ENCODE measurements at regions of chr1 and their contacts with region 1.

Region 1: DNA sequence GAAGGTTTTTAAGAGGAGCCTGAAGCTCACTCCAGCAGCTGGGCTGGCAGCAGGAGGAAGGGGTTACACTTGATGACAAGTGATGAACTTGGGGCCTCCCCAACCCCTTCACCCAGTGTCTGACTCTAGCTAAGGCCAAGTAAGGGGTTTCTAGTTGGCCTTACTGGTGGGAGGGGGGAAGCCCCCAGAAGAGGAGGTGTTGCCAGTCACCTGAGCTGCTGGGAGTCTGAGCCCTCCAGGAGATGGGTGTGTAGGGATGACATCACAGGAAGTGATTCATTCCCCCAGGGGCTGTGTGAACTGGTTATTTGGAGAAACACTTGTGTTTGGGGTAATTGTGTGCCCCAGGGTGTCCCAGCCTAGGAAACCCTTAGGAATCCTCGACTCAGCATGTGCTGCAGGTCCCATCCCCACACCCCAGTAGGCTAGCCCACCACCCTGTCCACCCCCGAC is 3.1 kb downstream of the PADI1 start:
- DNase-seq: peak; percentile 72
- ATAC-seq: peak; percentile 87
- H3K4me3 ChIP-seq: no peak overlapping the region
- H3K27ac ChIP-seq: no peak overlapping the region
- H3K4me1 ChIP-seq: peaks cover 14% of the 10 kb centered on the region
- H3K27me3 ChIP-seq: peaks cover 0 to 2% of the 10 kb centered on the region in 2 experiments; a peak in 2 of 4 replicates
- CTCF ChIP-seq: no peak
- EP300 ChIP-seq: peak in 1 of 2 experiments; percentile 61; a peak in 1 of 4 replicates
- POLR2A ChIP-seq: no peak
- RAD21 ChIP-seq: no peak

Region 2: GRCh38 chr1:17141441-17142197 is 66.4 kb before region 1 on chr1:
- CTCF ChIA-PET with region 1: interaction called, 11 read pairs
- POLR2A ChIA-PET with region 1: interaction called, 4 read pairs
- RAD21 ChIA-PET with region 1: interaction called, 26 read pairs
- SMC1A ChIA-PET with region 1: interaction called, 26 read pairs
- in situ Hi-C with region 1: no loop called
- intact Hi-C with region 1: no loop called
- DNase-seq: peak; percentile 85
- ATAC-seq: peak; percentile 90
- H3K4me3 ChIP-seq: no peak overlapping the region
- H3K27ac ChIP-seq: peak overlapping the region; percentile 78
- H3K4me1 ChIP-seq: peaks cover 15% of the 10 kb centered on the region
- H3K27me3 ChIP-seq: no peaks in the 10 kb centered on the region
- CTCF ChIP-seq: peak in 1 of 3 experiments; percentile 32; a peak in 1 of 6 replicates
- EP300 ChIP-seq: peak; percentile 45 to 84; a peak in 2 of 4 replicates
- POLR2A ChIP-seq: no peak; the same call in 1 of the 2 replicates
- RAD21 ChIP-seq: 0 out of 2 replicates have a peak, but pooled peaks have one; percentile 5